HEK293 (cell line): ENCODE measurements at regions of chr17 and their contacts with region 1.

Region 1: GRCh38 chr17:2075336-2076086 is 20.6 kb downstream of the HIC1 start:
- H3K4me3 ChIP-seq: no peak overlapping the region
- H3K27ac ChIP-seq: peak overlapping the region; percentile 42; the same call in 1 of the 2 replicates
- H3K4me1 ChIP-seq: peaks cover 3% of the 10 kb centered on the region; the same call in 1 of the 2 replicates
- CTCF ChIP-seq: no peak

Region 2: DNA sequence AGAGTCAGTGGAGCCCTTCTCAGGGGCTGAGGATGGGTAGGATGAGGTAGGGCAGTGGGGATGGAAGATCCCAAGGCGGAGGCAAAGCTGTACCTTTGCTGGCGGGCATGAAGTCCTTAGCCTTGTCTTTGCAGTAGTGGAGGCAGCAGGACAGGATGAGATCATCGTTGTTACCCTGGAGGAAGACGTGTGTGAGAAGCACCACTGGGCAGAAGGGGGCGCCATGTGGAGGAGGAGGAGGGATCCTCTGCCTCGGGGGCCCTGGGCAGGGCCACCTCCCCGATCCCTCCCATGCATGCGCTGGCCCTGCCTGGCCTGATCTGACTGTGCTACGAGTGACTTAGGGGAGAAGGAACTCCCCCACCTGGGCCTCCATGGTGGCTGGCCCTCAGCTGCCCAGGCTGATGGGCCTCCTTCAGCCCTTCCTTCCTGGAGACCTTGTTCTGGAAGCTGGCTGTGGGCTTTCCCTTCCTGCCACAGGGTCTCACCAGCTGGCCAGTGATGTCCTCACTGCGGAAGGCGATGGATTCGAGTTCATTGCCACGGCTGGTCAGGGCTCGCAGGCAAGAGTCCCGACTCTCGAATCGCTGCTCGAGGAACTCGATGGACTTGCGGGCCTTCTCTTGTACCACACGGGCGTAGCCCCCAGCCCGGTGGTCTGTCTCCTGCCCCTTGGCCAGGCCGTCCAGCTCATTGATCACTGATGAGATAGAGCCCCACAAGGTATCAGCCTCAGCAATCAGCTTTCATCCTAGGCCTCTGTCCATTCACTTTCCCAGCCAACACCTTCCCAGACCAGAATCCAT is 10.3 kb before region 1 on chr17:
- CTCF ChIA-PET with region 1: interaction called, 18 read pairs
- POLR2A ChIA-PET with region 1: no interaction called
- H3K4me3 ChIP-seq: no peak overlapping the region
- H3K27ac ChIP-seq: 0 out of 2 replicates have a peak overlapping the region, but pooled peaks have one; percentile 31
- H3K4me1 ChIP-seq: no peaks in the 10 kb centered on the region; the same call in 1 of the 2 replicates
- CTCF ChIP-seq: peak; percentile 77